PC-9 (cell line): ENCODE measurements at regions of chr15 and their contacts with region 1.

Region 1: DNA sequence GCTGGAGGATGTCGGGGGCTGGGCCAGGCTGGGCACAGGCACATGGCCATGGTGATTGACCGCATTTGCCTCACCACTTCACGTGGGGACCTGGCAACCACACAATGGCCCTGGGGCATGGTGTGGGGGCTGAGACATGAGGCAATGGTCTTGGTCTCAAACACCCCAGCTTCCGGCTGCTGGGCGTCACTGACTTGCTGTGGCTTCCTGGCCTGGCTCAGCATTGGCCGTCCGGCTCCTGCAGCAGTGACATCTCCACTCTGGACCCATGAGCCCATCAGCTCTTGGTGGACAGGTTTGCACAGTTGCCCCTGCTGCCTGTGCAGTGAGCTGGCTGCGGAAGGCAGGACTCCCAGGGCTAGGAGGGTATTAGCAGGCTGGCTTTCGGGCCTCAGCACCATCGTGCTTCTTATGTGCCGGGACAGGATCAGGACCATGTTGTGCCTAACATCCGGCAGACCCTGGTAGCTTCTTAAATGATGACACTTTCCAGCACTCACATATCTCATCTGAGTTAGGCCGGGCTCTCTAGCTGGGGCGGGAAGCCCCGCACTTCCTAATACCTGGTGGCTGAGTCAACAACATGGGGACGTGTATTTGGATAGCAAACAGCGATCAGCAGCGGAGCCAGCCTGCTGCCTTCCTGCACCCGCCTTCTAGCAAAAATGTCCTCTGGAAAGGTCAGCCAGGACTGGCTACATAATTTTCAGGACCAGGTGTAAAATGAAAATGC is 34.1 kb downstream of the ZNF710 start:
- DNase-seq: peak; percentile 88 to 90
- H3K4me3 ChIP-seq: no peak overlapping the region; the same call in 1 of the 2 replicates
- H3K27ac ChIP-seq: peak overlapping the region; percentile 88
- H3K4me1 ChIP-seq: peaks cover 57% of the 10 kb centered on the region
- H3K27me3 ChIP-seq: no peaks in the 10 kb centered on the region
- CTCF ChIP-seq: no peak

Region 2: DNA sequence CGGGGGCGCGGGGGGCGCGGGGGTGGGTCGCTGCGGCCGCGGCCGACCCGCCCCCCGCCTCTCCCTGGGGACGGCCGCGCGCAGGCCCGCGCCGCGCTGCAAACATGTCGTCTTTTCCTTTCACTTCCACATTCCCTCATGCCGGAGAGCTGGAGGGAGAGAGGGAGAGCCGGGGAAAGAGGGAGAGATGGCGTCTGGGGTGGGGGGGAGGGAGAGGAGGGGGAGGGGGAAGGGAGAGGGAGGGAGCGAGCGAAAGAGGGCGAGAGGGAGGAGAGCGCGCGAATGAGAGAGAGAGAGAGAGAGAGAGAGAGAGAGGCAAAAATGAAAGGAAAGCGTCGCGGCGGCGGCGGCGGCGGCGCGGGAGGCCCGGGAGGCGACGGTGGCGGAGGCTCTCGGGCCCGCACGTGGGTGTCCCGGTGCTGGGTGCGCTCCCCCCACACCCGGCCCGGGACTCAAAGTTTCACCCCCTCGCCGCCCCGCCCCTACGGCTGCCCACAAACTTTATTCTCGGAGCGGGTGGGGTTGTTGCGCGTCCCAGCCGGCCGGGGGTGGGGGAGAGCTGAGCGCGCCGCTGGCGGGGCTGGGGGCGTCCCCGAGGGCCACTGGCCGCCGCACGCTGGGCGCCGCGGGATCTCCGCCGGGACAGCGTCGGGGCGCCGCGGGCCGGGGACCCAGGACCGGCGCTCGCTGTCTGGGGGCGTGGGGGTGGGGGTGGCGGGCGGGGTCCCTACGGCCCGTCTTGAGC is 33.4 kb before region 1 on chr15:
- CTCF ChIA-PET with region 1: no interaction called
- POLR2A ChIA-PET with region 1: no interaction called
- intact Hi-C with region 1: loop called (anchors 1 kb)
- DNase-seq: peak in 1 of 2 experiments; percentile 42
- H3K4me3 ChIP-seq: peak overlapping the region; percentile 65; the same call in 1 of the 2 replicates
- H3K27ac ChIP-seq: peak overlapping the region; percentile 49
- H3K4me1 ChIP-seq: peaks cover 79% of the 10 kb centered on the region
- H3K27me3 ChIP-seq: no peaks in the 10 kb centered on the region
- CTCF ChIP-seq: no peak

Region 3: DNA sequence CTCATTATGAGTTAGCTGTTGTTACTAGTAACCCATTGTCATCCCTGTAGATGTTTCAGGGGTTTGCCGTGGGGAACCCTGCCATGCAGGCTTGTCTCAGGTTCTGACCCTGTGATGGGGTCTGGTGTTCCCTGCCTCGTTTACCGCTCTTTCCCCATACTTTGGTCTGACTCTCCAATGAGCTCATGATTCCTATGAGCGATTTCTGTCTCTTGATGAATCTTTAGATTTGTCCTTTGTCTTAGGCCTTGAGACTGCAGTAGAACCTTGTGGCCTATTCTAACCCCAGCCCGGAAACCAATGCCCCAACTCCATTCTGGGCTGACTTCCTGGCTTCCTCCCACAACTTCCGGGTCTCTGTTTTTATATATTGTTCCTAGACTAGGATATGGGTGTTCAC is 341.5 kb after region 1 on chr15:
- CTCF ChIA-PET with region 1: no interaction called
- POLR2A ChIA-PET with region 1: interaction called, 11 read pairs
- intact Hi-C with region 1: no loop called
- DNase-seq: no peak
- H3K4me3 ChIP-seq: no peak overlapping the region
- H3K27ac ChIP-seq: no peak overlapping the region
- H3K4me1 ChIP-seq: no peaks in the 10 kb centered on the region
- H3K27me3 ChIP-seq: no peaks in the 10 kb centered on the region
- CTCF ChIP-seq: no peak